Adrenal gland (tissue), 19 donors: ENCODE measurements at regions of chr3 and their contacts with region 1.

Region 1: DNA sequence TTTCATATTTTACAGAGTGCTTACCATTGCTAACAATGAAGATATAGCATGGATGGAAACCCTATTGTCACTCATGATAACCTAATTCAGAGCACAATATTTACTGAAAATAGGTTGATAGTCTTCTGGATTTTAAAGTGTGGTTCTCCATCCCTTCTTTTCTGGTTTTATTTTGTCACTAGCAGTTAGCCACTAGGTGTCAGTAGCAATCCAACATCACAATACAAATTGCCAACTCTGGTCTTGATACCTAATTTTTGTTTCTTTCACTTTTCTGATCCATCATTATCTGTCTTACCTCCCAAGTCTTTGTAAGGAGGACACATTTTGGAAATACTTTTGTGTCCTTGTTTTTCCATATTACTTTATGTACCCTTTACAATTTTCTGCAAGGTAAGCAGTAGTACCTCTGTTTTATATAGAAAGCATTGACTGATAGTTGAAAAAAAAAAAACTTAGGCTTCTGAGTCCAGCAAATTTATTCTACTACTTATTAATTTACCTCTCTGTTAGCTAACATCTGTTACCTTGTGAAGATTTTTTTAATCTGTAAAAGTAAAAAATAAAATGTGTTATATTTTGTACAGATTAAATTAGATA is 28.3 kb upstream of the CRYBG3 start:
- DNase-seq: peak in 2 of 7 donors; percentile 10 to 19
- H3K4me3 ChIP-seq: no peak overlapping the region
- H3K27ac ChIP-seq: no peak overlapping the region
- H3K4me1 ChIP-seq: no peaks in the 10 kb centered on the region
- H3K27me3 ChIP-seq: no peaks in the 10 kb centered on the region
- CTCF ChIP-seq: peak; percentile 61 to 94 (median 87)
- POLR2A ChIP-seq: no peak

Region 2: GRCh38 chr3:97882975-97883598 is 89.6 kb after region 1 on chr3:
- intact Hi-C with region 1: no loop called
- DNase-seq: peak in 2 of 7 donors; percentile 6 to 12
- H3K4me3 ChIP-seq: no peak overlapping the region
- H3K27ac ChIP-seq: no peak overlapping the region
- H3K4me1 ChIP-seq: no peaks in the 10 kb centered on the region
- H3K27me3 ChIP-seq: no peaks in the 10 kb centered on the region
- CTCF ChIP-seq: no peak
- POLR2A ChIP-seq: no peak

Region 3: GRCh38 chr3:98022978-98023820 is 229.7 kb after region 1 on chr3:
- intact Hi-C with region 1: loop called (anchors 2 to 5 kb)
- DNase-seq: peak; percentile 81 to 96 (median 91)
- H3K4me3 ChIP-seq: no peak overlapping the region
- H3K27ac ChIP-seq: no peak overlapping the region
- H3K4me1 ChIP-seq: peaks cover 0 to 7% of the 10 kb centered on the region in 2 donors
- H3K27me3 ChIP-seq: no peaks in the 10 kb centered on the region
- CTCF ChIP-seq: peak; percentile 81 to 99 (median 94)
- POLR2A ChIP-seq: no peak